Adrenal gland (tissue), 19 donors: ENCODE measurements at regions of chr5 and their contacts with region 1.

Region 1: GRCh38 chr5:64603676-64604075 is 86.6 kb upstream of the SHISAL2B start:
- DNase-seq: no peak
- H3K4me3 ChIP-seq: no peak overlapping the region
- H3K27ac ChIP-seq: no peak overlapping the region
- H3K4me1 ChIP-seq: no peaks in the 10 kb centered on the region
- H3K27me3 ChIP-seq: no peaks in the 10 kb centered on the region
- CTCF ChIP-seq: no peak
- POLR2A ChIP-seq: no peak

Region 2: GRCh38 chr5:64505769-64506566 is 97.7 kb before region 1 on chr5 and contains the start of gene RGS7BP:
- intact Hi-C with region 1: loop called in 1 of 2 experiments (anchors 10 kb)
- DNase-seq: peak; percentile 46 to 93 (median 58)
- H3K4me3 ChIP-seq: peak within 1 kb of the TSS in 3 of 4 donors; percentile 35 to 57 (median 46)
- H3K27ac ChIP-seq: peak within 1 kb of the TSS in 2 of 5 donors; percentile 68 to 80
- H3K4me1 ChIP-seq: peaks cover 0 to 7% of the 10 kb centered on the region in 2 donors
- H3K27me3 ChIP-seq: no peaks in the 10 kb centered on the region
- CTCF ChIP-seq: peak in 2 of 6 experiments; percentile 6 to 31
- POLR2A ChIP-seq: peak; percentile 41 to 60
- total RNA-seq, gene RGS7BP: 3.6 to 23.5 (median 11.1) TPM